Mucosa of descending colon (tissue), 3 donors: ENCODE measurements at regions of chr6 and their contacts with region 1.

Region 1: GRCh38 chr6:36885461-36886401 is at the start of gene C6orf89:
- DNase-seq: peak; percentile 96 to 99 (median 98)
- ATAC-seq: peak; percentile 100
- H3K4me3 ChIP-seq: peak within 1 kb of the TSS; percentile 59
- H3K4me1 ChIP-seq: peaks cover 9% of the 10 kb centered on the region
- CTCF ChIP-seq: peak; percentile 79
- total RNA-seq, gene C6orf89: 53.9 to 66.6 (median 56.0) TPM

Region 2: DNA sequence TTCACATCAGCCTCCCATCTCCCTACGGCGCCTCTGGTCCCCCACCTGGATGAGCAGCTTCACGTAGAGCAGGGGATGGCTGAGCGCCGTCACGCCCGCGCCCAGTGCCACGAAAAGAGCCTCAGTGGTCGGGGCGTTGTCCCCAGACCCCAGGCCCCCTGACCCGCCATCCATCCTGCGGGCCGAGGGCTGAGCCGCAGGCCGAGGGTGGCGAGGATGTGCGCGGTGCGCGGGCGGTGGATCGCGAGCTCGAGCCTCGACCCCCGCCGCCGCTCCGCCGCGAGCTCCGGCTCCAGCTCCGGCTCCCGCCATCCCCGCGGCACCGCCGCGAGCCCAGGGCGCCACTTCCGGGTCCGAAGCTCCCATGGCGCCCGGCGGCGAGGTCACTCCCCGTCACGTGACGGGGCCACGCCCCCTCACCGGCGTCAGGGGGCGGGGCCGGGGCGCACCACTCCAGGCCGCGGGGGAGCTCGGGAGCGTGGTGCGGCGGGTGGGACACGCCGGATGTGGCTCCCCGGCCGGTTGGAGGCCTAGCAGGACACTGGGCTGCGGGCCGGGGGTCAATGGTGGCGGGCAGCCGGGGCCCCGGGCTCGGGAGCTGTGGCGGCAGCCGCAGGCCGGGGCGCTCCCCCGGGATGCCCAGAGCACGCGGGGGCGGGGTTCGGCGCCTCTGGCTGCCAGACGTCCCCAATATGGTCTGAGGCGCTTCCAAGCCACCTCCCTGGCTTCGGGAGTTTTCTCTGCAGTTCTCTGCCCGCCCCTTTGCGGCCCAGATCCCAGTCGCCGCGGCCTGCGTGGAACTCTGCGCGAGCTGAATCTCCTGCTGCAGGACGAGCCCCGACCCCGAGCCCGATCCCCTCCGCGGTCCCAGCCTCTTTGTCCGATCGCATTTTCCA is 100.3 kb after region 1 on chr6 and contains the start of gene MTCH1:
- intact Hi-C with region 1: loop called in 1 of 2 experiments (anchors 10 kb)
- DNase-seq: peak; percentile 89 to 94 (median 92)
- ATAC-seq: peak; percentile 97
- H3K4me3 ChIP-seq: peak within 1 kb of the TSS; percentile 99
- H3K4me1 ChIP-seq: peaks cover 23% of the 10 kb centered on the region
- CTCF ChIP-seq: no peak
- total RNA-seq, gene MTCH1: 153 to 186 (median 157) TPM

Region 3: DNA sequence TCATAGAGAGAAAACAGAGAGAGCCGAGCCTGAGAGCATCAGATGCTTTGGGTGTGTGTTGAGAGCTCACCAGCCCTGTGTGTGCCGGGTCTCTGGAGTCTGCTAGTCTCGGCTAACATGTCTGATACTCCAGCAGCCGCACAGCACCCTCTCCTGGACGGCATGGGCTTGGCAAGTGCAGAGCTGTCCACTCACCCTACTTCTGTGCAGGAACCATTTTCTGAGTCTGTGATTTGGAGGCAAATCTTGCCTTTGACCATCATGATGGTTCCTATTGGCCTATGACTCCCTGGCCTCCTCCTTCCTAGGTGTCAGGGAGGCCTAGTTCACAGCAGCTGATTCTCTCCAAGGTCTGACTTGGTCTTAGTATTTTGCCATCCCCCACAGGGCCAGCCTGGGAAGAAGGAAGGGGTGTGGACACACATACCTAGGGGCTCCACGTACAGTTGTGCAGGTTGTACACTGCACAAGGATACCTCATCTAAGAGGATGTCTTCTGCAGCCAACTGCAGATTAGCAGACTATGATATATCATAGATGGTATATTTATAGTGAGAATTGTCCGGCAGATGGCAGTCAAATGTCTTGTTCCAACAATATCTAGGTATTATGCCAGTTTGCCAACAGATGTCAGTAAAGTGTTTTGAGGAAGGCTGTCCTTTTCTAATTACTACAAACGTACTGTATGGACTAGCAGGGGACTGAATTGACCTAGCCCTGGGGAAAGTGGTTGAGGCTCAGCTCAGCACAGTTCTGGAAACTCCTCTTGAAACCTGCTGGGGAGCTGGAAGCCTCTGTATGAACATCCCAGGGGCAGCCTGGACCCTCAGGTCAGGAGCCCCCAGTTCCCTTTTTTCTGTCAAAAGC is 132.7 kb after region 1 on chr6:
- intact Hi-C with region 1: loop called in 1 of 2 experiments (anchors 5 kb)
- DNase-seq: peak; percentile 91 to 94 (median 93)
- ATAC-seq: peak; percentile 92
- H3K4me3 ChIP-seq: no peak overlapping the region
- H3K4me1 ChIP-seq: peaks cover 7% of the 10 kb centered on the region
- CTCF ChIP-seq: peak; percentile 85

Region 4: GRCh38 chr6:37232430-37233017 is 346.8 kb after region 1 on chr6:
- intact Hi-C with region 1: no loop called
- DNase-seq: no peak
- ATAC-seq: no peak
- H3K4me3 ChIP-seq: no peak overlapping the region
- H3K4me1 ChIP-seq: no peaks in the 10 kb centered on the region
- CTCF ChIP-seq: no peak

Region 5: DNA sequence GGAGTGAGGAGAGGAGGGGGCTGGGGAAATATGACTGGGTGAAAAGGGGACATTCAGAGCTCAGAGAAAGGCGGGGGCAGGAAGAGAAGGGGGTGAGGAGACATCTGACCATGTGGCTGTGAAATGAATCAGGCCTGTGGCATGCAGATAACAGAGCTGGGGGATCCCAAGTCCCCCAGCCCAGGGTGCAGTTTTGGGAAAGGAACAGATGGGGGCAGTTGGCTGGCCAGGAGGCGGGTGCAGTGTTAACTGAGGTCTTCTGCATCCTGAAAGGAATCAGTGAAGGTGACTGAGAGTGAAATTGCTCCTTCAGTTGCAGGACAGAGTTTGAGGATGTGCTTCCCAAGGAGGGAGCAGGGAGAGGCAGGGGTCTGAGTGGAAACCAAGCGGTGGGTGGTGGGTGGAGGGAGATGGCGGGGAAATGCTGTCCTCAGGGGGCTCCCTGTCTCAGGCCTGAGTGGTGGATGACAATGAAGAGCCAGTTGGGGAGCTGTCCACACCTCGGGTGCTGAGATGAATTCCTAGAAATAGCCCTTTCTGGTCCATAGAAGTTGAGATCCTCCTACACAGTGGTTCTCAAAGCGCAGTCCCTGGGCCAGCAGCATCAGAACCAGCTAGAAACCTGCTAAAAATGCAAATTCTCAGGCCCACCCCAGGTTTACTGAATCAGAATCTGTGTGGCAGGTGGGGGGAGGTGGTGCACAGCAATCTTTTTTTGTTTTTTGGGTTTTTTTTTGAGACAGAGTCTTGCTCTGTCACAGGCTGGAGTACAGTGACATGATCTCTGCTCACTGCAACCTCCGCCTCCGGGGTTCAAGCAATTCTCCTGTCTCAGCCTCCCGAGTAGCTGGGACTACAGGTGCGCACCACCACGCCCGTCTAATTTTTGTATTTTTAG is 640.0 kb after region 1 on chr6:
- intact Hi-C with region 1: no loop called
- DNase-seq: no peak
- ATAC-seq: no peak
- H3K4me3 ChIP-seq: no peak overlapping the region
- H3K4me1 ChIP-seq: no peaks in the 10 kb centered on the region
- CTCF ChIP-seq: no peak